Uterus (tissue), 4 donors: ENCODE measurements at regions of chr11 and their contacts with region 1.

Region 1: GRCh38 chr11:94243571-94244515 is 60.5 kb upstream of the IZUMO1R start:
- DNase-seq: no peak
- H3K4me3 ChIP-seq: no peak overlapping the region
- H3K27ac ChIP-seq: no peak overlapping the region
- H3K4me1 ChIP-seq: no peaks in the 10 kb centered on the region
- H3K27me3 ChIP-seq: no peaks in the 10 kb centered on the region
- CTCF ChIP-seq: no peak
- POLR2A ChIP-seq: no peak

Region 2: DNA sequence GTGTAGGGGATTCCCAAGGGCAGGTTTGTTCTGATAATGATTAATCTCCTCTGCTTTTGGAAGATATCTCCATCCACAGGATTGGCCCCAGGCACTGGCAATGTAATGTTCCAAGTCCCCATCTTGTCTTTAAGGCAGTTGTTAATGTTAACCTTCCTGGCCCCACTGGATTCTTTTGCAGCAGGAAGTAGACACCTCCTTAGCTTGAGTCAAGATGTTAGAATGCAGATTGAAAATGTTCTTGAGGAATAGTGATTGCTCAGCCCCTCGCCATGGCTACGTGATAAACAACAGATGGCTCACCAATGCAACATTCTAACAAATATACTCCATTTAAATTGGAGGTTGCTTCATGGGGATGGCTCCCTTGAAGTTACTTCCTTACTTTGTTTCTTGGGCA is 215.4 kb before region 1 on chr11:
- intact Hi-C with region 1: no loop called
- DNase-seq: no peak
- H3K4me3 ChIP-seq: no peak overlapping the region
- H3K27ac ChIP-seq: no peak overlapping the region
- H3K4me1 ChIP-seq: no peaks in the 10 kb centered on the region
- H3K27me3 ChIP-seq: no peaks in the 10 kb centered on the region
- CTCF ChIP-seq: no peak
- POLR2A ChIP-seq: no peak

Region 3: DNA sequence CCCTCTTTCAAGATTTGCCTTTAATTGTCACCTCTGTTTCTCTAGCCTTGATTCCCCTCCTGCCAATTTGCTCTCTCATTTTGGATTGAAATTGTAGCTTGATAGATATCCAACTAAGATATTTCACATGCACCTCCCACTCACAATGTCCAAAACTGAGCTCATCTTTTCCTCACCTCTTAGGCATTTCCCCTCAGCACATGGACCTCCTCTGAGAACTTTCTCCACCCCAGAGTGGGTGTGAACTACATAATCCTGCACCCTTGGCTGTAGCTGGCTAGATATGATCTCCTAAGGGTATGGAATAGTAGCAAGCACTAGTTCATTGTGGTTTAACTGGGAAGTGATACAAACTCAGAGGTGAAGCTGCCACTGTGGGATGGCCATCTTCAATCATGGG is 1078.7 kb after region 1 on chr11:
- intact Hi-C with region 1: loop called (anchors 5 kb)
- DNase-seq: no peak
- H3K4me3 ChIP-seq: no peak overlapping the region
- H3K27ac ChIP-seq: no peak overlapping the region
- H3K4me1 ChIP-seq: no peaks in the 10 kb centered on the region
- H3K27me3 ChIP-seq: no peaks in the 10 kb centered on the region
- CTCF ChIP-seq: no peak
- POLR2A ChIP-seq: no peak